GM12878 (cell line): ENCODE measurements at regions of chr2 and their contacts with region 1.

Region 1: DNA sequence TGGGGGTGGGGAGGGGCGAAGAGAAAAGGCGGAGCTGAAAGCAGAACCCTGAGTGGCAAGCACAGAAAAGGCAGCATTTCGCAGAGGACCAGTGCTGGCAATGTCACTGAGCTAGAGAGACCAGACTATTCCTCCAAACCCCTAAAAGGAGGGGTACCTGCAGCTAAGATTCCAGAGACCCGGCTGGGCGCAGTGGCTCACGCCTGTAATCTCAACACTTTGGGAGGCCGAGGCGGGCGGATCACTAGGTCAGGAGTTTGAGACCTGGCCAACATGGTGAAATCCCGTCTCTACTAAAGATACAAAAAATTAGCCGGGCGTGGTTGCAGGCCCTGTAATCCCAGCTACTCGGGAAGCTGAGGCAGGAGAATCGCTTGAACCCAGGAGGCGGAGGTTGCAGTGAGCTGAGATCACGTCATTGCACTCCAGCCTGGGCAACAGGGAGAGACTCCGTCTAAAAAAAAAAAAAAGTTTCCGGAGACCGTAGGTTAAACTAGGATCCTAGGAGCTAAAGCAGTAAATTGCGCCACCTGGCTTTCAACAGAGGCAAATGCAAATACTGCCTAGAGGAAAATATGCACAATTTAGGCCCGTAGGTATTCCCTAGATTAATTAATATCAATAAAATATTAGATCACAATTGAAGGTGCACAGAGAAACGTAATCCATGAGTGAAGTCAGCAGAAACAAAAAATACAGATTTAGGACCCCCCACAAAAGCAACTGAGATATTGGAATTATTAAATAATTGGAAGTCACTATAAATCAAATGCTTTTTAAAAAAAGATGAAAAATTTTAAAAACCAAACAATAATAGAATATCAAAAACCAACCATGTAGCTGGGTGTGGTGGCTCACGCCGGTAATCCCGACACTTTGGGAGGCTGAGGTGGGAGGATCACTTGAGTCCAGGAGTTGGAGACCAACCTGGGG is 4.9 kb downstream of the UCN start:
- DNase-seq: no peak
- ATAC-seq: peak; percentile 82
- H3K4me3 ChIP-seq: peak overlapping the region; percentile 48; the same call in 1 of the 2 replicates
- H3K27ac ChIP-seq: no peak overlapping the region
- H3K4me1 ChIP-seq: no peaks in the 10 kb centered on the region
- H3K27me3 ChIP-seq: no peaks in the 10 kb centered on the region; a peak in 1 of 4 replicates
- CTCF ChIP-seq: peak; percentile 75 to 83 (median 80)
- EP300 ChIP-seq: no peak
- POLR2A ChIP-seq: no peak
- RAD21 ChIP-seq: peak; percentile 72

Region 2: DNA sequence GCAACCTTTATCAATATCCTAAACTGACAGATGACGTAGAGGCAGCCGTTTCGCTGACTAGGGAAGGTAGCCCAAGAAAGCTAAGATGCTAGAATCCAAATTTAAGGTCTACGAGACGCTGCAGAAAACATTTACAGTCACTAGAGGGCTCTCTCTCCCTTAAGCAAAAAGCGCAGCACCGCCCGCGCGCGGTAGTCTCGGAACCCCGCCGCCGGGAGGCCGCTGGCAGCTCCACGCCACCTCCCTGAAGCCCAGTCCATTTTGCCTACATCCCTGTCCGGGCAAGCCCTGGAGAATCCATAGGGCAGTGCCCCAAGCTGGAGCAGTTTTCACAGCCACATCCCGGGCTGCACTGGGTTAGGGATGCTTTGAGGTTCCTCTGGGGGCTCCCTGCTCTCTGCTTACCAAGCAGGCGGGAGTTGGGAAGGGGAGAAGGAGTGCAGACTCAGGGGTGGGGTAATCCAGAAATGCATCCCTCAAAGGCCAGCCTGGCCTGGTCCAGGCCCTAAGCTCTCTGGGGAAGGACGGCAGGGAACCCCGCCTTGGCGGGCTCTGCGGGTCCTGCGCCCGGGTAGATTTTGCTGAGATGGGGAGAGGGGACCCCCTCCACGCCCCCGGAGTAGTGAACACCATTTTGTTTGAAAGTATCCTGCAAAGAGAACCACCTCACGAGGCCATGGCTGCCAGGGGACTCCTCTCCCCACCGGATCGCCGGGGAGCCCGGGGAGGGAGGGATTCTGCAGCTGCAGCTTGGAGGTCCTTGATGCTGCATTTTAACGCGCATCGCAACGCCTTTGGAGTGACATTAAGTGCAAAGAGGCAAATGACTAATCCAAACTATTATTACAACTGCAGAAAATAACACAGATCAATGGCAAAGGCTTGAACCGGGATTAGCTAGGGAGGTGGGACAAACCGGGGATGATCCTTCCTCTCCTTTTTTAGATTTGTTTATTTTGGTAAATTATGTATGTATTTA is 456.7 kb before region 1 on chr2:
- CTCF ChIA-PET with region 1: interaction called, 10 read pairs
- POLR2A ChIA-PET with region 1: no interaction called
- RAD21 ChIA-PET with region 1: interaction called, 5 read pairs
- SMC1A ChIA-PET with region 1: interaction called, 5 read pairs
- in situ Hi-C with region 1: no loop called
- intact Hi-C with region 1: no loop called
- DNase-seq: no peak
- ATAC-seq: peak; percentile 95
- H3K4me3 ChIP-seq: no peak overlapping the region
- H3K27ac ChIP-seq: no peak overlapping the region
- H3K4me1 ChIP-seq: no peaks in the 10 kb centered on the region
- H3K27me3 ChIP-seq: peaks cover 18 to 27% of the 10 kb centered on the region in 2 experiments
- CTCF ChIP-seq: peak; percentile 77 to 90 (median 77)
- EP300 ChIP-seq: no peak
- POLR2A ChIP-seq: no peak
- RAD21 ChIP-seq: peak; percentile 71

Region 3: DNA sequence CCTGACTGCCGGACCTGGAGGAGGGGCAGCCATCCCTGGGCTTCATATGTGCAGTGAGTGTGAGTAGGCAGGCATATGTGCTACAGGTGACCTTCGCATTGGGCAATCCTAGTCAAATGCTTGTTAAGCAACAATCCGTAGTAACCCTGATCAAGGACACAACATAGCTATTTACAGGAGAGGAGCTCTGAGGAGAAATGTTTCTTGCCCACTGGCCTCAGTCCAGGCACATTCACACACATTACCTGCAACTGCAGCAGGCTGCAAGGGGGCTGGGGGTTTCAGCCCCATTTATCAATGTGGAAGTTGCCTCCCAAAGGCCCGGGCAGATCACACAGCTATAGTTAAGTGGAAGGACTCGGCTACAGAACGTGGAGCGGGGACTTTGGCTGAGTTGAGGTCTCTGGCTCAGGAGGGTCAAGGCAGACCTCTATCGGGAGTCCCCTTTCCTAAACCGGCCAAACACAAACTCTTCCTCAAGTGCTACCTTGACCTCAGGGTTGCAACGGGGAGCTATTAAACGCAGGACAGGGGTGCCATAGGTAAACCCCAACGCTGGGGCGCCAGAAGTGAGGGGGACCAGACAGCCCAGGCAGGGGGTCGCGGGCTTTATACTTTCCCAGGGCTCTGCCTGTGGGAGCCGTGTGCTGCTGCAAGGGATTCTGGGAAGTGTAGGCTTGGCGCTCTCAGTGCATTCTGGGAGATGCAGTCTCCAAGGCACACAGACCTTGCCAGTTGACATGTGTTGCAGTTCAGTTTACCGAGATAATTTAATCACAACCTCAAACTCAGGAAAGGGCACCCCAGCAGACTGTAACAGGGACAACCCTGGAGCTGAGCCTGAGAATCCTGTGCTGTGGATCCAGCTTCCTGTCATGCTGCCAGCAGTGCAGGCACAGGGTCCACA is 207.4 kb before region 1 on chr2:
- CTCF ChIA-PET with region 1: interaction called, 60 read pairs
- POLR2A ChIA-PET with region 1: no interaction called
- RAD21 ChIA-PET with region 1: interaction called, 23 read pairs
- SMC1A ChIA-PET with region 1: interaction called, 4 read pairs
- in situ Hi-C with region 1: no loop called
- intact Hi-C with region 1: loop called (anchors 1 kb)
- DNase-seq: no peak
- ATAC-seq: peak; percentile 93
- H3K4me3 ChIP-seq: no peak overlapping the region
- H3K27ac ChIP-seq: no peak overlapping the region
- H3K4me1 ChIP-seq: no peaks in the 10 kb centered on the region; the same call in 1 of the 2 replicates
- H3K27me3 ChIP-seq: no peaks in the 10 kb centered on the region
- CTCF ChIP-seq: no peak
- EP300 ChIP-seq: no peak
- POLR2A ChIP-seq: no peak
- RAD21 ChIP-seq: no peak

Region 4: GRCh38 chr2:27249891-27250651 is 53.3 kb before region 1 on chr2:
- CTCF ChIA-PET with region 1: interaction called, 12 read pairs
- POLR2A ChIA-PET with region 1: interaction called, 3 read pairs
- RAD21 ChIA-PET with region 1: interaction called, 3 read pairs
- SMC1A ChIA-PET with region 1: interaction called, 3 read pairs
- in situ Hi-C with region 1: no loop called
- intact Hi-C with region 1: no loop called
- DNase-seq: no peak
- ATAC-seq: peak; percentile 88
- H3K4me3 ChIP-seq: no peak overlapping the region
- H3K27ac ChIP-seq: no peak overlapping the region
- H3K4me1 ChIP-seq: no peaks in the 10 kb centered on the region
- H3K27me3 ChIP-seq: peaks cover 2 to 4% of the 10 kb centered on the region in 2 experiments; a peak in 3 of 4 replicates
- CTCF ChIP-seq: peak; percentile 66 to 79 (median 66)
- EP300 ChIP-seq: no peak
- POLR2A ChIP-seq: no peak
- RAD21 ChIP-seq: peak; percentile 81

Region 5: DNA sequence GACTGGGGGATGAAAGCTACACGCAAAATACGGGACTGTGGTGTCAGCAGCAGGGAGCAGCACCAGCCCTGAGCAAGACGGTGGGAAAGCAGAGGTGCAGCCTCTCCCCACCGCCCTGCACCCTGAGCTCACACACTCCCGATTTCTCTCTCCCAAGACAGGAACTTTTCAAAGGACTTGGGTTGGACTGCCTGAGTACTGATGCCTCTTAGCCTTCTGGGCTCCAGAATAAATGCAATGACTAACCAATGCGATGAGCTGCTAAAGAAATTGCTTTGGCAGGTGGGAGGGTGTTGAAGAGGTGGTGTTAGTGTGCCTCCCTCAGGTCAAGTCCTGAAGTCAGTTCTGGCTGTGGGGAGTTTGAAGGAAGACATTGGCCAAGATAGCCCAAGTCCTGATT is 11.5 kb before region 1 on chr2:
- CTCF ChIA-PET with region 1: interaction called, 51 read pairs
- POLR2A ChIA-PET with region 1: interaction called, 4 read pairs
- RAD21 ChIA-PET with region 1: interaction called, 8 read pairs
- SMC1A ChIA-PET with region 1: interaction called, 7 read pairs
- in situ Hi-C with region 1: no loop called
- intact Hi-C with region 1: no loop called
- DNase-seq: no peak
- ATAC-seq: peak; percentile 28; the same call in 1 of the 3 replicates
- H3K4me3 ChIP-seq: no peak overlapping the region
- H3K27ac ChIP-seq: no peak overlapping the region
- H3K4me1 ChIP-seq: no peaks in the 10 kb centered on the region
- H3K27me3 ChIP-seq: no peaks in the 10 kb centered on the region; a peak in 1 of 4 replicates
- CTCF ChIP-seq: peak in 1 of 3 experiments; percentile 13; a peak in 1 of 6 replicates
- EP300 ChIP-seq: no peak
- POLR2A ChIP-seq: no peak
- RAD21 ChIP-seq: 0 out of 2 replicates have a peak, but pooled peaks have one; percentile 14

Region 6: DNA sequence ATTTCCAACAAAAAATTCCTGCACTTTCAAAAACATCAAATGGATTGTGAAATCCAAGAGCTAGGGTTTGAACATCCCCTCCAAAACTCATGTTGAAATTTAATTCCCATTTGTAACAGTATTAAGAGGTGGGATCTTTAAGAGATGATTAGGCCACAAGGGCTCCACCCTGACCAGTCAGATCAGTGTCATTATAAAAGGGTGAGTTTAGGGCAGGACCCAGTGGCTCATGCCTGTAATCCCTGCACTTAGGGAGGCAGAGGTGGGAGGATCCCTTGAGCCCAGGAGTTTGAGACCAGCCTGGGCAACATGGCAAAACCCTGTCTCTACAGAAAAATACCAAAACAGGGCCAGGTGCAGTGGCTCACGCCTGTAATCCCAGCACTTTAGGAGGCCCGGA is 44.3 kb after region 1 on chr2:
- CTCF ChIA-PET with region 1: interaction called, 12 read pairs
- POLR2A ChIA-PET with region 1: no interaction called
- RAD21 ChIA-PET with region 1: no interaction called
- SMC1A ChIA-PET with region 1: interaction called, 3 read pairs
- in situ Hi-C with region 1: no loop called
- intact Hi-C with region 1: no loop called
- DNase-seq: no peak
- ATAC-seq: no peak
- H3K4me3 ChIP-seq: no peak overlapping the region
- H3K27ac ChIP-seq: no peak overlapping the region
- H3K4me1 ChIP-seq: no peaks in the 10 kb centered on the region
- H3K27me3 ChIP-seq: no peaks in the 10 kb centered on the region
- CTCF ChIP-seq: no peak
- EP300 ChIP-seq: no peak
- POLR2A ChIP-seq: no peak
- RAD21 ChIP-seq: no peak